Panc1 (cell line): ENCODE measurements at regions of chr10 and their contacts with region 1.

Region 1: GRCh38 chr10:35126530-35127296 is at the start of gene CREM:
- DNase-seq: peak; percentile 67
- ATAC-seq: peak; percentile 95
- H3K4me3 ChIP-seq: peak within 1 kb of the TSS; percentile 89 to 91
- H3K27ac ChIP-seq: peak within 1 kb of the TSS; percentile 91
- H3K4me1 ChIP-seq: peaks cover 3% of the 10 kb centered on the region; the same call in 1 of the 2 replicates
- H3K27me3 ChIP-seq: no peaks in the 10 kb centered on the region
- CTCF ChIP-seq: peak; percentile 86
- total RNA-seq, gene CREM: 13.7 TPM

Region 2: GRCh38 chr10:35195361-35196306 is 68.9 kb after region 1 on chr10:
- CTCF ChIA-PET with region 1: interaction called, 9 read pairs
- POLR2A ChIA-PET with region 1: interaction called, 6 read pairs
- in situ Hi-C with region 1: no loop called
- intact Hi-C with region 1: loop called (anchors 2 kb)
- DNase-seq: peak; percentile 93
- ATAC-seq: peak; percentile 96
- H3K4me3 ChIP-seq: peak overlapping the region; percentile 45 to 58
- H3K27ac ChIP-seq: peak overlapping the region; percentile 68
- H3K4me1 ChIP-seq: peaks cover 4% of the 10 kb centered on the region
- H3K27me3 ChIP-seq: no peaks in the 10 kb centered on the region
- CTCF ChIP-seq: peak; percentile 81

Region 3: DNA sequence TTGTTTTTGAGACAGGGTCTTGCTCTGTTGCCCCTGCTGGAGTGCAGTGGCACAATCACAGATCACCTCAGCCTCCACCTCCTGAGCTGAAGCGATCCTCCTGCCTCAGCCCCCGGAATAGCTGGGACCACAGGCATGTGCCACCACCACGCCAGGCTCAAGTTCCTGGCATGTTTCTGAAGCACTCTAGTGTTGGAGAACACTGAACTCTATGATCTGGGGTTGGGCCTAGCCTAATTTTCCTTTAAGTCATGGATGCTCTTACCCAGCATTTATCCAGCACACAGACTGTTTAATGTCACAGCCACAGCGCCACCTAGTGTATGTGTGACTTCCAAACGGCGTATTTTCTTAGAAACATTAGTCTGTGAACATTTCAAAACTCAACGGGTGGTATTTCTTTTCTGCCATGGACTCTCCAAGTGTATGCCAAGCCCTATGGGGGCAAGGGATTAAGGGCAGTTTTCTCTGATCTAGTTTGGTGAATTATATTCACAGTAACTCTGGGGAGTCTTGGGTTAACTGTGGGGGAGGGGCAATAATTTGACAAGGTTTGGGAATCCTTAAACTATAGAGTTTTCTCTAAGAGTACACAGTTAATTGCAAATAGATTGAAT is 91.7 kb after region 1 on chr10:
- CTCF ChIA-PET with region 1: no interaction called
- POLR2A ChIA-PET with region 1: interaction called, 7 read pairs
- in situ Hi-C with region 1: no loop called
- intact Hi-C with region 1: loop called (anchors 2 kb)
- DNase-seq: no peak
- ATAC-seq: peak; percentile 89
- H3K4me3 ChIP-seq: 0 out of 4 replicates have a peak overlapping the region, but pooled peaks of 1 of the 2 experiments have one; percentile 15
- H3K27ac ChIP-seq: no peak overlapping the region
- H3K4me1 ChIP-seq: no peaks in the 10 kb centered on the region
- H3K27me3 ChIP-seq: no peaks in the 10 kb centered on the region
- CTCF ChIP-seq: peak; percentile 79

Region 4: GRCh38 chr10:35271086-35271858 is 144.6 kb after region 1 on chr10:
- CTCF ChIA-PET with region 1: no interaction called
- POLR2A ChIA-PET with region 1: no interaction called
- in situ Hi-C with region 1: no loop called
- intact Hi-C with region 1: no loop called
- DNase-seq: no peak
- ATAC-seq: no peak
- H3K4me3 ChIP-seq: no peak overlapping the region
- H3K27ac ChIP-seq: no peak overlapping the region
- H3K4me1 ChIP-seq: no peaks in the 10 kb centered on the region
- H3K27me3 ChIP-seq: no peaks in the 10 kb centered on the region
- CTCF ChIP-seq: no peak